ENCODE measurements at regions of chr1 and their contacts with region 1.

Region 1: DNA sequence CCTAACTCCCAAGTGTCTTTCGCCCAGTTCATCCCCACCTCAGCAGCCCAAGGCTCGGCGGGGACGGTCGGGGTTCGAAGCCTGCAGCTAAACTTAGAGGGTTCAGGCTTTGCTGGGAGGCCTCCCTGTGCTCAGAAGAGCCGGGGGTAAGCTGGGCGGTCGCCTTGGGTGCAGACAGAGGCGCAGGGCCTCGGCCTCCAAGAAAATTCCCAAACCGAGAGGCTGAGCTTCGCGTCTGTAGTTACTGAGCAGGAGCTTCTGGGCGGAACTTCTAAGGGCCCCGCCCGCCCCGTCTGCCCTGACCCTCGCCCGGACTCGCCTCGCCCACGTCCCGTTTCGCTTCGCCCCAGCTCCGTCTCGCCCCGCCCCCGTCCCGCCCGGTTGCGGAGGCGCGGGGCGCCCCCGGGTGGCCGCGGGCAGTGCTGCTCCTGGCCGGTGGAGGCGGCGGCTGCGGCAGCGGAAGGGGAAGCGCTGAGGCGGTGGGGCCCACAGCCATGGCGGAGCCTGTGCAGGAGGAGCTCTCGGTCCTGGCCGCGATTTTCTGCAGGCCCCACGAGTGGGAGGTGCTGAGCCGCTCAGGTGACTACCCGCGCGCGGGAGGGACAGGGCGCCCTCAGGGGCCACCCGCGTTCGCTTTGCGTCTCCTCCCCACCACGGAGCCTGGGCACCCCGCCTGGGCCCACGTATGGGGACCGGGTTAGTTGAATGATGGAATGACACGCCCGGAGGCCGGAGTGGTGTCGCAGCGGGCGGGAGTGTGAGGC is at the start of gene RWDD3:
- DNase-seq: peak; percentile 78 to 96
- H3K4me3 ChIP-seq: peak within 1 kb of the TSS; percentile 76 to 93 (median 84)
- H3K27ac ChIP-seq: peak within 1 kb of the TSS; percentile 75; the same call in 1 of the 2 replicates
- H3K4me1 ChIP-seq: peaks cover 0 to 4% (median 1%) of the 10 kb centered on the region in 4 experiments; a peak in 4 of 7 replicates
- H3K27me3 ChIP-seq: peaks cover 0 to 3% (median 0%) of the 10 kb centered on the region in 4 experiments; a peak in 2 of 7 replicates
- CTCF ChIP-seq: peak; percentile 80 to 94 (median 80)
- EP300 ChIP-seq: 0 out of 3 replicates have a peak, but pooled peaks of 1 of the 2 experiments have one; percentile 63
- POLR2A ChIP-seq: peak; percentile 39 to 75
- RAD21 ChIP-seq: peak; percentile 70 to 91
- total RNA-seq, gene RWDD3: 12.3 and 14.5 TPM in 2 replicates

Region 2: GRCh38 chr1:95072532-95073419 is 161.1 kb before region 1 on chr1 and contains the start of gene ALG14:
- CTCF ChIA-PET with region 1: interaction called, 19 read pairs
- POLR2A ChIA-PET with region 1: interaction called, 3 read pairs
- DNase-seq: peak; percentile 79 to 90
- H3K4me3 ChIP-seq: peak within 1 kb of the TSS; percentile 81 to 95 (median 88)
- H3K27ac ChIP-seq: no peak within 1 kb of the TSS
- H3K4me1 ChIP-seq: no peaks in the 10 kb centered on the region
- H3K27me3 ChIP-seq: no peaks in the 10 kb centered on the region
- CTCF ChIP-seq: no peak
- EP300 ChIP-seq: no peak
- POLR2A ChIP-seq: no peak
- RAD21 ChIP-seq: no peak
- total RNA-seq, gene ALG14: 1.3 TPM in 2 replicates

Region 3: DNA sequence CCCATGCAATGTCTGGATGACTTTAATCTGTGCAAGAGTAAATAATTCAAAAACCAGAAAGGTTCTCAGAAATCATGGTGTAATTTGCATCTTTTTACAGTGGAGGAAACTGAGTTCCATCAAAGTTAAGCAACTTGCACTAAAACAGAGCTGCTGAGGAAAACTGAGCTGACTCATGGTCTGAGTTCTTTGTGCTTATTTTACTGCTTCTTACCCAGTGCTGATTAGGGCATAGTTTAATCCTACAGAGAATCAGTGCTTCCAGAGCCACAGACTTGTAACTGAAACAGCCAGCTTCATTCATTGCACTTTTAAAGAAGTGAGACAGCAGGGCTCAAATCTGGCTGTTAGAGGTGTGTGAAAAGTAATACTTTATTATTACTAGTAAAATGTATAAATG is 10.8 kb before region 1 on chr1:
- CTCF ChIA-PET with region 1: interaction called, 15 read pairs
- POLR2A ChIA-PET with region 1: interaction called, 5 read pairs
- DNase-seq: no peak
- H3K4me3 ChIP-seq: no peak overlapping the region
- H3K27ac ChIP-seq: no peak overlapping the region
- H3K4me1 ChIP-seq: peaks cover 0 to 5% (median 4%) of the 10 kb centered on the region in 4 experiments; a peak in 3 of 7 replicates
- H3K27me3 ChIP-seq: no peaks in the 10 kb centered on the region
- CTCF ChIP-seq: no peak
- EP300 ChIP-seq: no peak
- POLR2A ChIP-seq: no peak
- RAD21 ChIP-seq: no peak

Region 4: GRCh38 chr1:95262913-95263312 is 29.0 kb after region 1 on chr1:
- CTCF ChIA-PET with region 1: no interaction called
- POLR2A ChIA-PET with region 1: no interaction called
- DNase-seq: no peak
- H3K4me3 ChIP-seq: no peak overlapping the region
- H3K27ac ChIP-seq: no peak overlapping the region
- H3K4me1 ChIP-seq: no peaks in the 10 kb centered on the region
- H3K27me3 ChIP-seq: no peaks in the 10 kb centered on the region
- CTCF ChIP-seq: no peak
- EP300 ChIP-seq: no peak
- POLR2A ChIP-seq: no peak
- RAD21 ChIP-seq: no peak